ENCODE measurements at regions of chr22 and their contacts with region 1.

Region 1: DNA sequence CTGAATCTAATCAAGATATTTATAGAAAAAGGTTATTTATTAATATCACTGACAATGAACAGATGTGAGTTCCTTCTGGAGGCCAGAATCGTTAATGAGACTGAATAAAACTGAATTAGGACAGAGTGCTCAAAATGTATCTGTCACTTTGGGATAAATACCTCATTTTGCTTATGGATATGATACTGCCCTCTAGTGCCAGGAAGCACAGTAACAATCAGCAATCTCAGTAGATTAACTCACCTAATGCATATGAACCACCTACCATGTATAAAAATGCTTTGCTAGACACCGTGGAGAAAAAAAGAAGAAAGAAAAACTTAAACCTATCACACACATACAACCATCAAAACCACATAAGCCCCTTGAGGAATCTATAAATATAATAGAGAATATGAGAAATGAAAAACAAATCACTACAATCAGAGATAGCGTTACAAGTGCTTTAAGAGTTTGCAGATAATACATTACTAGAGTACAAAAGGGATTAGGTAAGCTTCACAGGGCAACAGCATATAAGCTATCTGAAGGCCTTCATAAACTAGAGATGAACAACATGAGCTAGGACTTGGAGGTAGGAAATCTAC is 117.4 kb downstream of the SGSM3 start:
- DNase-seq: no peak
- ATAC-seq: peak; percentile 57
- H3K4me3 Mint-ChIP-seq: no peak overlapping the region
- H3K27ac Mint-ChIP-seq: peak overlapping the region; percentile 25
- H3K4me1 Mint-ChIP-seq: peaks cover 45% of the 10 kb centered on the region
- H3K27me3 Mint-ChIP-seq: no peaks in the 10 kb centered on the region
- CTCF ChIP-seq: peak; percentile 94

Region 2: DNA sequence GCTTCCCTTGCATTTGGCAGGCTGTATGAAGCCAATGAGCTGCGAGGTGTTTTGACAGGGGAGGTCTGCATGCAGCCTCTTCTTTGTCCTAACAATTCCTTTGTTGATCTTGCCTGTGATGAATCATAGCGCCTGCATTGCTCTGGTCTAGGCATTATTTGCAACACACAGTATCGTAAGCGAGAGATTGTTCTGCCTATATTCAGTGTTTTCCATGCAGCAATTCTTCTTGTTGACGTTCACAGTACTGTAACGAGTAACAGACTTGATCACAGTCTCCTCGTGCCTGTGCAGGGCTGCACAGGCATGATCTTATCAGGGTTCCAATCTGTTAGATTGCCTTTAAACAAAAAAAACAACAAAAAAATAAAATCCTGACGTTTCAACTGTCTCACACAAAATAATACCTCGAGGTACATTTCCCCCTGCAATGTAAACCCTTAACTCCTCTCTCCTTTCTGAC is 155.4 kb before region 1 on chr22:
- CTCF ChIA-PET with region 1: no interaction called
- POLR2A ChIA-PET with region 1: no interaction called
- intact Hi-C with region 1: no loop called
- DNase-seq: no peak
- ATAC-seq: peak; percentile 32
- H3K4me3 Mint-ChIP-seq: peak overlapping the region; percentile 59
- H3K27ac Mint-ChIP-seq: peak overlapping the region; percentile 88
- H3K4me1 Mint-ChIP-seq: peaks cover 92% of the 10 kb centered on the region
- H3K27me3 Mint-ChIP-seq: no peaks in the 10 kb centered on the region
- CTCF ChIP-seq: no peak

Region 3: DNA sequence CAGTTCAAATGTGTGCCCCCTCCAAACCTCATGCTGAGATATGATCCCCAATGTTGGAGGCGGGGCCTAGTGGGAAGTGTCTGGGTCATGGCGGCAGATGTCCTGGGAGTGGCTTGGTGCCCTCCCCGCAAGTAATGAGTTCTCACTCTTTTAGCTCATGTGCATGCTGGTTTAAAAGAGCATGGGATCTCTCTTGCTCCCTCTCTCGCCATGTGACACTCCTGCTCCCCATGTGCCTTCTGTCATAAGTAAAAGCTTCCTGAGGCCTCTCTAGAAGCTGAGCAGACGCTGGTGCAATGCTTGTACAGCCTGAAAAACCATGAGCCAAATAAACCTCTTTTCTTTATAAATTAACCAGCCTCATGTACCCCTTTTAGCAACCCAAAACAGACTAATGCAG is 18.6 kb before region 1 on chr22:
- CTCF ChIA-PET with region 1: interaction called, 27 read pairs
- POLR2A ChIA-PET with region 1: interaction called, 4 read pairs
- intact Hi-C with region 1: no loop called
- DNase-seq: no peak
- ATAC-seq: no peak
- H3K4me3 Mint-ChIP-seq: no peak overlapping the region
- H3K27ac Mint-ChIP-seq: no peak overlapping the region
- H3K4me1 Mint-ChIP-seq: peaks cover 26% of the 10 kb centered on the region
- H3K27me3 Mint-ChIP-seq: no peaks in the 10 kb centered on the region
- CTCF ChIP-seq: no peak

Region 4: GRCh38 chr22:40533712-40534378 is 46.1 kb after region 1 on chr22:
- CTCF ChIA-PET with region 1: interaction called, 13 read pairs
- POLR2A ChIA-PET with region 1: no interaction called
- intact Hi-C with region 1: no loop called
- DNase-seq: peak; percentile 77
- ATAC-seq: peak; percentile 95
- H3K4me3 Mint-ChIP-seq: peak overlapping the region; percentile 74
- H3K27ac Mint-ChIP-seq: peak overlapping the region; percentile 83
- H3K4me1 Mint-ChIP-seq: peaks cover 61% of the 10 kb centered on the region
- H3K27me3 Mint-ChIP-seq: no peaks in the 10 kb centered on the region
- CTCF ChIP-seq: no peak

Region 5: DNA sequence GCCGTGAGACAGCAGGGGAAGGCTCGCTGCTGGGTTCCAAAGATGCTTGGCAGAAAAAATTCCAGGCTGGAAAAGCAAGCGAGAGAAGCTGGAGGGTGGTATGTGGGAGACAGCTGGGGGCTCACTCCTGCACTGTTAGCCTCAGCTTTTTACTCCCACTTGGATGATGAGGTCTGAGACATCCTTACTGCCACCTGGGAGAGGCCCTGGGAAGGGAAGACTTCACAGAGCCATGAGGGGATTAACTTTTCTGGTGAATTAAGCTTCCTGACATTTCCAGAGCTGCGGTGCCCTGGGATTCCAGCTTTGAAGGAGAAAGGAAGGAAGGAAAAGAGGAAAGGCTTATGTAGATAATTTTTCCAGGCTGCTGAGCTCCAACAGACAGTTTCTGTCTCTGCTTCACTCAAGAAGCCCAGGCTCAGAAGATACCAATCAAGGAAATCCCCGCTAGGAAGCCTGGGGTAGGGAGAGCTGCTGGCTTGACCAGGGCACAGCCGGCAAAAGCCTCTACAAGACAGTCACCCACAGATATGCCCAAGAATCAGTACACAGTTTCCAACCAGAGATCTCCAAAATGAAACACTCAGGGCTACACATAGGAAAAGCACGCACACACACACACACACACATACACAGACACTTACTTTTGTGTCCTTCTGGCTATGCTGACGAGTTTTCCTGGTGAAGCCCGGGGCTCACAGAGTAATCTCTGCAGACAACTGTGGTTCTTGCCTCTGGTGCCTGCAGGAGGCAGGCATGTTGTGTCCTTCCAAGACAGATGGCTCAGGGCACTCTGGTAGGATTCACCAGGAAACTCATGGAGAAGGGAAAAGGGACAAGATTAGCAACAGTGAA is 192.4 kb after region 1 on chr22:
- CTCF ChIA-PET with region 1: no interaction called
- POLR2A ChIA-PET with region 1: no interaction called
- intact Hi-C with region 1: no loop called
- DNase-seq: no peak
- ATAC-seq: no peak
- H3K4me3 Mint-ChIP-seq: no peak overlapping the region
- H3K27ac Mint-ChIP-seq: no peak overlapping the region
- H3K4me1 Mint-ChIP-seq: peaks cover 30% of the 10 kb centered on the region
- H3K27me3 Mint-ChIP-seq: peaks cover 20% of the 10 kb centered on the region
- CTCF ChIP-seq: no peak

Region 6: DNA sequence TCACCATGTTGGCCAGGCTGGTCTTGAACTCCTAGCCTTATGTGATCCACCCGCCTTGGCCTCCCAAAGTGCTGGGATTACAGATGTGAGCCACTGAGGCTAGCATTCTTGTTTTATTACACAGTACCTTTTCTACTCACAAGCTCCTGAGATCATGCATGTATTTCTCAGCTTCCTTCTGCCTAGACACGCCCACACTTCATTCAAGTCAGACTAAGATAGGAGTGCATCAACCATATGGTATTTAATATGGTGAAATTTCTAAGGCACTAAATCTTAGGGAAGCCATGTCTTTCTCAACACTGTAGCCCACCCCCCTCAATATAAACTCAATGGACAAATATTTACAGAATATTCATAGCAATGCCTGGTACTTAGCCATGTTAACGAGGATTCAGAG is 269.3 kb after region 1 on chr22:
- CTCF ChIA-PET with region 1: no interaction called
- POLR2A ChIA-PET with region 1: no interaction called
- intact Hi-C with region 1: no loop called
- DNase-seq: no peak
- ATAC-seq: no peak
- H3K4me3 Mint-ChIP-seq: no peak overlapping the region
- H3K27ac Mint-ChIP-seq: no peak overlapping the region
- H3K4me1 Mint-ChIP-seq: peaks cover 2% of the 10 kb centered on the region
- H3K27me3 Mint-ChIP-seq: no peaks in the 10 kb centered on the region
- CTCF ChIP-seq: no peak

Measured in activated CD8-positive, alpha-beta T cell treated with anti-CD3 and anti-CD28 coated beads for 36 hours (primary cell).